GM12878 (cell line): ENCODE measurements at regions of chr3 and their contacts with region 1.

Region 1: GRCh38 chr3:128650096-128651050 is at the start of gene RPN1:
- DNase-seq: peak; percentile 74
- ATAC-seq: peak; percentile 98
- H3K4me3 ChIP-seq: peak within 1 kb of the TSS; percentile 100
- H3K27ac ChIP-seq: peak within 1 kb of the TSS; percentile 90
- H3K4me1 ChIP-seq: no peaks in the 10 kb centered on the region
- H3K27me3 ChIP-seq: no peaks in the 10 kb centered on the region
- CTCF ChIP-seq: no peak
- EP300 ChIP-seq: no peak
- POLR2A ChIP-seq: peak; percentile 94
- RAD21 ChIP-seq: no peak
- polyA plus RNA-seq, gene RPN1: 56.1 to 58.3 TPM

Region 2: DNA sequence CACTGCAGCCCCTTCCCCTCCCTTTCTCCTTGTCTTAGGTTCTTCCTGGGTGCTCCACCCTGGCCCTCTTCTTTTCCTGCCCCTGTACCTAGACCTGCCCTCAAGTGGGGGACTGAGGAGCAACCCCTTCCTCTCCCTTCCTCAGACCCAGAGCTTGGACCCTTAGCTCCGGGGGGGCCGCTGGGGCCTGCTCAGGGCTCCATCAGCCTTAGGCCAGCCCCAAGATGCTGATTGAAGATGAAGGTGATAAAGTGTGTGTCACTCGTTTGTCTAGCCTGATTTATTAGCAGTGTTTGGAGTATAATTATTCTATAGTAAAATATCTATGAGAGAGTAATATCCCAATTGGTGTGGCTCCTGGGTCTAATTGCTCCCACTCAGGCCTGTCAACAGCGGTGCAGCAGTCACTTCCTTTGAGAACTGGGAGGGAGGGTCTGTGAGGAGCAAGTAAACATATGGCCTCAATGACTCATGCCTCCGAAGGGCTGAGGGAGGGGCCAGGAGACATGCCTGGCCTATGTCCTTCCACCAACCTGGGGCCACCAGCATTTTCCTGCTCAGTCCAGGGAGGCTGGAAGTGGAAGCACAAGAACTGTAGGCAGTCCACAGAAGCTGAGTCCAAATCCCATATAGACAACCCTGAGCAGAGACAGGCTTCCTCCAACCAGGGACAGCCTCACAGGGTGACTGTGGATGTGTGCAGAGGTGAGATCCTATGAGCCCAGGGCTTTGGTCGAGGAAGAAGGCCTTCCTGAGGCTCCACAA is 306.9 kb before region 1 on chr3:
- CTCF ChIA-PET with region 1: no interaction called
- POLR2A ChIA-PET with region 1: no interaction called
- RAD21 ChIA-PET with region 1: no interaction called
- SMC1A ChIA-PET with region 1: no interaction called
- in situ Hi-C with region 1: no loop called
- intact Hi-C with region 1: no loop called
- DNase-seq: no peak
- ATAC-seq: no peak
- H3K4me3 ChIP-seq: no peak overlapping the region
- H3K27ac ChIP-seq: no peak overlapping the region
- H3K4me1 ChIP-seq: peaks cover under 1% of the 10 kb centered on the region; the same call in 1 of the 2 replicates
- H3K27me3 ChIP-seq: no peaks in the 10 kb centered on the region
- CTCF ChIP-seq: no peak
- EP300 ChIP-seq: no peak
- POLR2A ChIP-seq: no peak
- RAD21 ChIP-seq: no peak

Region 3: DNA sequence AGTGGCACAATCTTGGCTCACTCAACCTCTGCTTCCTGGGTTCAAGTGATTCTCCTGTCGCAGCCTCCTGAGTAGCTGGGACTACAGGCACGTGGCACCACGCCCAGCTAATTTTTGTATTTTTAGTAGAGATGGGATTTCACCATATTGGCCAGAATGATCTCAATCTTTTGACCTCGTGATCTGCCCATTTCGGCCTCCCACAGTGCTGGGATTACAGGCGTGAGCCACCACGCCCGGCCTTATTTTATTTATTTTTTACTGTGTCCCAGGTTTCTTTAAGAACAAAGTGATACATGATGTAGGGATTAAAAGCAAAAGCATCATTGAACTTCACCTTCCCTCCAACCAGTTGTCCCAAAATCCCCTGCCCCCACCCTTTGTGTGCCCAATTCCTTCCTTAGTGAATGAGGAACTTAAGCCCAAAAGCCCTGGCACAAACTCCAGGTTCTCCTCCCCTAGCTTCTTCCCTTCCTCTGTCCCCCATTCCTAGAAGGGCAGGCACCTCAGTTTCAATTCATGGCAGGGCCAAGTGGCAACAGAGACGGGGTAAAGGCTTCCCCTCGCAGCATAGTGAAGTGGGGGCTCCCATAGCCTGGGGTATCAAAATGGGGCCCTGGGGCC is 23.9 kb after region 1 on chr3:
- CTCF ChIA-PET with region 1: interaction called, 3 read pairs
- POLR2A ChIA-PET with region 1: interaction called, 12 read pairs
- RAD21 ChIA-PET with region 1: interaction called, 12 read pairs
- SMC1A ChIA-PET with region 1: no interaction called
- in situ Hi-C with region 1: no loop called
- intact Hi-C with region 1: no loop called
- DNase-seq: no peak
- ATAC-seq: no peak
- H3K4me3 ChIP-seq: peak overlapping the region; percentile 72
- H3K27ac ChIP-seq: peak overlapping the region; percentile 92
- H3K4me1 ChIP-seq: peaks cover 12% of the 10 kb centered on the region
- H3K27me3 ChIP-seq: no peaks in the 10 kb centered on the region
- CTCF ChIP-seq: no peak
- EP300 ChIP-seq: no peak
- POLR2A ChIP-seq: no peak
- RAD21 ChIP-seq: no peak

Region 4: GRCh38 chr3:129077222-129077621 is 426.8 kb after region 1 on chr3:
- CTCF ChIA-PET with region 1: no interaction called
- POLR2A ChIA-PET with region 1: no interaction called
- RAD21 ChIA-PET with region 1: no interaction called
- SMC1A ChIA-PET with region 1: no interaction called
- in situ Hi-C with region 1: no loop called
- intact Hi-C with region 1: no loop called
- DNase-seq: no peak
- ATAC-seq: no peak
- H3K4me3 ChIP-seq: no peak overlapping the region
- H3K27ac ChIP-seq: no peak overlapping the region
- H3K4me1 ChIP-seq: no peaks in the 10 kb centered on the region
- H3K27me3 ChIP-seq: no peaks in the 10 kb centered on the region
- CTCF ChIP-seq: no peak
- EP300 ChIP-seq: no peak
- POLR2A ChIP-seq: no peak
- RAD21 ChIP-seq: no peak

Region 5: GRCh38 chr3:129183569-129184395 is 533.4 kb after region 1 on chr3 and contains the start of gene CNBP:
- CTCF ChIA-PET with region 1: no interaction called
- POLR2A ChIA-PET with region 1: no interaction called
- RAD21 ChIA-PET with region 1: no interaction called
- SMC1A ChIA-PET with region 1: no interaction called
- in situ Hi-C with region 1: no loop called
- intact Hi-C with region 1: loop called (anchors 10 kb)
- DNase-seq: peak; percentile 65
- ATAC-seq: peak; percentile 97
- H3K4me3 ChIP-seq: peak within 1 kb of the TSS; percentile 97
- H3K27ac ChIP-seq: peak within 1 kb of the TSS; percentile 97
- H3K4me1 ChIP-seq: peaks cover 9% of the 10 kb centered on the region
- H3K27me3 ChIP-seq: no peaks in the 10 kb centered on the region
- CTCF ChIP-seq: no peak
- EP300 ChIP-seq: no peak
- POLR2A ChIP-seq: peak; percentile 98
- RAD21 ChIP-seq: no peak
- polyA plus RNA-seq, gene CNBP: 618 to 719 TPM